Adrenal gland (tissue), 19 donors: ENCODE measurements at regions of chr10 and their contacts with region 1.

Region 1: DNA sequence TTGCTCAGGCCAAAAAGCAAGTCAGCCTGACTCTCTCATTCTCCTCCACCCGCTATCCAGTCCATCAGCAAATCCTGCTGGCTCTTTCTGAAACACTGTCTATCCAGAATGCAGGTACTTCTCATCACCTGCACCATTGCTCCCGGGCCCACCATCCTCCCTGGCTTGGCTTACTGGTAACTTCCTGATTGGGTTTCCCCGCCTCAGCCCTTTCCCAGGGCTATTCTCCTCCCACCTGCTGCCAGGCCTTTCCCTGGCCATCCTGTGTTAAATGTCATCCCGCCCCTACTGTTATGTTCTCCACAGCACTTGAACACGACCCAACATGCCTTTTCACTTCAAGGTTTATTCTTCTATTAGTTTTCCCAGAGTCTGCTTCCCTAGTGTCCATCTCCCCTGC is 124.0 kb downstream of the CNNM2 start:
- DNase-seq: no peak
- H3K4me3 ChIP-seq: no peak overlapping the region
- H3K27ac ChIP-seq: no peak overlapping the region
- H3K4me1 ChIP-seq: peaks cover 0 to 6% of the 10 kb centered on the region in 2 donors
- H3K27me3 ChIP-seq: no peaks in the 10 kb centered on the region
- CTCF ChIP-seq: no peak
- POLR2A ChIP-seq: no peak

Region 2: GRCh38 chr10:103025696-103026095 is 16.4 kb before region 1 on chr10:
- intact Hi-C with region 1: loop called in 1 of 2 experiments (anchors 2 kb)
- DNase-seq: no peak
- H3K4me3 ChIP-seq: no peak overlapping the region
- H3K27ac ChIP-seq: no peak overlapping the region
- H3K4me1 ChIP-seq: peaks cover 0 to 23% of the 10 kb centered on the region in 2 donors
- H3K27me3 ChIP-seq: no peaks in the 10 kb centered on the region
- CTCF ChIP-seq: no peak
- POLR2A ChIP-seq: no peak

Region 3: DNA sequence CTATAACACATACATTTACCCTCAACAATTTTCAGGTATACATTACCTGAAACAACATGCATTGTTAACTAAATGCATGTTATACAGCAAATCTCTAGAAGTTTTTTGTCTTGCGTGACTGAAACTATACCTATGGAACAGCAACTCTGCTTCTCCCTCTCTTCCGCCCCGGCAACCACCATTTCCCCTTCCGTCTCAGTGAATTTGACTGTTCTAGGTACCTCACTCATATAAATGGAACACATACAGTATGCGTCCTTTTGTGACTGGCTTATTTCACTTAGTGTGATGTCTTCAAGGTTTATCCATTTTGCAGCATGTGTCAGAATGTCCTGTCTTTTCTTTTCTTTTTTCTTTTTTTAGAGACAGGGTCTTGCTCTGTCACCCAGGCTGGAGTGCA is 387.5 kb after region 1 on chr10:
- intact Hi-C with region 1: no loop called
- DNase-seq: no peak
- H3K4me3 ChIP-seq: no peak overlapping the region
- H3K27ac ChIP-seq: no peak overlapping the region
- H3K4me1 ChIP-seq: peaks cover 6 to 9% of the 10 kb centered on the region in 2 donors
- H3K27me3 ChIP-seq: no peaks in the 10 kb centered on the region
- CTCF ChIP-seq: no peak
- POLR2A ChIP-seq: no peak